Gastrocnemius medialis (tissue), 4 donors: ENCODE measurements at regions of chr1 and their contacts with region 1.

Region 1: DNA sequence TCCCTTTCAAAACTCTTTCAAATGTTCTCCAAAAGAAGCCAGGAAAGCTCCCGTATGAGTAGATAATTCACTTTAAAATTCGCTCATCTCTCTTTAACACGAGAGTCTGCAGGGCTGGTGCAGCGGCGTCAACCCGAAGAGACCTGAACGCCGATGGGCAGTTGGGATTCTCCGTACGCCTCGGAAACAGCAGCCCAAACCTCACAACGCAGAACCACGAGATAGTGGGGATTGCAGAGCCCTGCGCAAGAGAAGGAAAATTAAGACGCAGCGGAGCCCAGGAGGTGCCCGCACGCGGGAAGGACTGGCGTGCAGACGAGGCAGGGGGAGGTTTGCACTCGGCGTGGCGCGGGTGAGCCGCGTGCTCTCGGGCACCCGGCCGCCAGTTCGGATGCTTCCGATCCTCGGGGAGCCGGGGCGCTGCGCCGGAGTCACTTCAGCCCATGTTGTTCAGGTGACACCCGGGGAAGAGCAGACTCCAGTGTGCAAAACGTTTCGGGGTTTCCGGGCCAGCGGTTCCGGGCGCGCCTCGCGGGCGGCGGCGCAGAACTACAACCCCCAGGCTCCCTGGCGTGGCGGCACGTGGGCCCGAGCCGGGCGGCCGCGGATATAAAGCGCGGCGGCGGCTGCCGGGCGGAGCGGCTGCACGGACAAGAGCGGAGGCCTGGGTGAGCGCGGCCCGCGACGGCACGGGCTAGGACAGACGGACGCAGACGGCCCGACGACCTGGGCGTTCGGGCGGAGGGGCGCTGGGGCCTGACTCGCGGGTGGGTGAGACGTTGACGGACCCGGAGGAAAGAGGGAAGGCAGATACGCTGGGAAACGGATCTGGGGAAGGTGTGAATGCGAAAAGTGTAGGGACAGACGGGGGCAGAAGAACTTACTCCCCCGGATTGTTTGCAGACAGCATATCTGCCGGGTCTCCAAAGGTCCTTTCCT is at the start of gene NPL:
- DNase-seq: peak; percentile 56 to 78
- ATAC-seq: peak; percentile 91 to 95
- H3K4me3 ChIP-seq: peak within 1 kb of the TSS; percentile 72 to 86 (median 78)
- H3K27ac ChIP-seq: peak within 1 kb of the TSS; percentile 81 to 87 (median 83)
- H3K4me1 ChIP-seq: peaks cover 7 to 9% of the 10 kb centered on the region in 2 donors
- H3K27me3 ChIP-seq: no peaks in the 10 kb centered on the region
- CTCF ChIP-seq: no peak
- POLR2A ChIP-seq: peak; percentile 81 to 97
- total RNA-seq, gene NPL: 2.7 to 6.5 (median 4.3) TPM

Region 2: DNA sequence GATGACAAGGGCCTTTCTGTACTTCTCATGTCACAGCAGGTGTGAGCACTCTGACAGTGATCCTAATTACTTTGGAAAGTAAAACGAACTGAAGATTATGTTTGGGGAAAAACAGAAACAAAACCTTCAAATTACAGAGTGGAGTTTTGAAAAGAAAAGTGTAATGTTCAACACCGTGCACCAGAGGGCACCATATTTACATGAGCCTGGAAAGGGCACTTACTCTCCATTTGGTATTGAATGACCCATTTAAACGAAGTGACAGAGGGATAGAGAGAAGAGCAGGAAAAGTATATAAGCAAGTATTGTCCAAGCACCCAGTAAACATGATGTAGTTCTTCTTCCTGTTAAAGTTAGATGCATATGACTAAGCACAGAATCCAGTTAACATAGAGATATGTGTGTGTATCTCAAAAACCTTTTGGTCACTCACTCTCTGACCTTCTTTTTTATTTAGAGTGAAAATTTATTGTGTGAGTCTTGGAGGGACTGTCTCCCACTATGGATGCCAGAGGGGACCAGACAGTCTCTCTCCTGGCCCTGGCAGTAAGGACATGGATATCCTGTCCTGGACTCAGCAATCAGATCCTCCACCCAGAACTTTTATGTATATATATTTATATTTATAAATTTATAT is 343.3 kb before region 1 on chr1:
- in situ Hi-C with region 1: loop called in 2 of 4 experiments (anchors 10 to 25 kb)
- intact Hi-C with region 1: loop called (anchors 5 kb)
- DNase-seq: no peak
- ATAC-seq: peak in 1 of 2 donors; percentile 55
- H3K4me3 ChIP-seq: no peak overlapping the region
- H3K27ac ChIP-seq: no peak overlapping the region
- H3K4me1 ChIP-seq: no peaks in the 10 kb centered on the region
- H3K27me3 ChIP-seq: no peaks in the 10 kb centered on the region
- CTCF ChIP-seq: peak in 4 of 5 experiments; percentile 25 to 63 (median 56)
- POLR2A ChIP-seq: no peak

Region 3: DNA sequence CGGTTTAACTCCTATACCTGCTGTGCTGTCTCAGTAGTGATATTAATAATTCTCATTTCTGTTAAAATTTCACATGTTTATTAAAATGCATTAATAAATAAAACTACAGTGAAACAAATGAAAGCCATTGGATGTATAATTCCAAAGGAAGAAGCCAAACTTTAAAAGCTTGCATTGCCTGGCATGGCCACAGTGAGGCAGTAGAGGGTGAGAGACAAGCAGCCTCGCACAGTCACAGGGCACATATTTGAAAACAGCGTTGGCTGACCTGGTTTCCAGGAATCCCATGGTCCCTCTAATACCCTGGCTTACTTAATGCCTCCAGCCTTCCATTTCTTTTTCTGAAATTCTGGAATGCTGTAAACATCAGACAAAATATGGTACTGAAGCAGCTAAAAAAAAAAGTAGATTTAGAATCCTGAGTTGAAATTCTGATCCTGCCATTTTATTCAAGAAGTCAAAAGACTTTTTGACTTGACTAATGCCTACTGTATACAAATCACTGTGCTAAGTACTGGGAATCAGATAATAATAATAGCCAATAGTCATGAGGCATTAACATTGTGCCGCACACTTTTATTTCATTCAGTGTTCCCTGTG is 193.7 kb before region 1 on chr1:
- in situ Hi-C with region 1: loop called (anchors 5 kb)
- intact Hi-C with region 1: no loop called
- DNase-seq: peak; percentile 33 to 51
- ATAC-seq: peak; percentile 58 to 78
- H3K4me3 ChIP-seq: no peak overlapping the region
- H3K27ac ChIP-seq: no peak overlapping the region
- H3K4me1 ChIP-seq: peaks cover 1 to 4% of the 10 kb centered on the region in 2 donors
- H3K27me3 ChIP-seq: no peaks in the 10 kb centered on the region
- CTCF ChIP-seq: peak; percentile 47 to 80 (median 69)
- POLR2A ChIP-seq: no peak

Region 4: GRCh38 chr1:182839209-182840065 is 50.0 kb after region 1 on chr1 and contains the start of gene DHX9:
- in situ Hi-C with region 1: no loop called
- intact Hi-C with region 1: loop called (anchors 1 kb)
- DNase-seq: peak; percentile 81 to 85
- ATAC-seq: peak; percentile 94 to 96
- H3K4me3 ChIP-seq: peak within 1 kb of the TSS; percentile 55 to 97 (median 87)
- H3K27ac ChIP-seq: peak within 1 kb of the TSS; percentile 84 to 98 (median 90)
- H3K4me1 ChIP-seq: peaks cover 29 to 41% of the 10 kb centered on the region in 2 donors
- H3K27me3 ChIP-seq: no peaks in the 10 kb centered on the region
- CTCF ChIP-seq: peak in 4 of 5 experiments; percentile 6 to 24 (median 19)
- POLR2A ChIP-seq: peak; percentile 79 to 87
- total RNA-seq, gene DHX9: 37.7 to 58.8 (median 48.4) TPM

Region 5: GRCh38 chr1:182886985-182887384 is 97.6 kb after region 1 on chr1:
- in situ Hi-C with region 1: no loop called
- intact Hi-C with region 1: no loop called
- DNase-seq: no peak
- ATAC-seq: no peak
- H3K4me3 ChIP-seq: no peak overlapping the region
- H3K27ac ChIP-seq: no peak overlapping the region
- H3K4me1 ChIP-seq: no peaks in the 10 kb centered on the region
- H3K27me3 ChIP-seq: no peaks in the 10 kb centered on the region
- CTCF ChIP-seq: no peak
- POLR2A ChIP-seq: no peak